ENCODE measurements at regions of chr11 and their contacts with region 1.

Region 1: DNA sequence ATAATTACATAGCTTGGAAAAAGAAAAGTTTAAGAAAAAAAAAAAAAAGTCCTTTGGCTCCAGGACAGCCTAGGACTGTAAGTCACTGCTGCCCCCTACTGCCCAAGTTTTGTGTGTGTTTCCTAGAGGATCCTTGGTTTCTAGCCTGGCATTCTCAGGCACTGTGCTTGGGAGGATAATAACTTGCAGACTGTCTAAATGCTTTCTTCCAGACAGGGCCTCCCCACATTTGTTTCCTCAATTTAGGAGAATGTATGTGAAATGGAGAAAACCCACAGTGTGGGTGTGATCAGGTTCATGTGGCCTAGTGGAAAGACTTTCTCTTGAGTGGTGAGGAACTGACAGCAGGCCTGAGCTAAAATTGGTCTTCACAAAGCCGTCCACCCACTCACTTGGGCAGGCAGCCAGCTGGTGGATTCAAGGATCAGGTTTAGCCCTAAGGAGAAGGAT is 191.0 kb downstream of the NAV2 start:
- DNase-seq: peak in 5 of 6 donors; percentile 70 to 83 (median 80)
- ATAC-seq: peak; percentile 75 to 87 (median 87)
- H3K4me3 ChIP-seq: no peak overlapping the region
- H3K27ac ChIP-seq: no peak overlapping the region
- H3K4me1 ChIP-seq: peaks cover 0 to 18% (median 12%) of the 10 kb centered on the region in 3 donors
- H3K27me3 ChIP-seq: no peaks in the 10 kb centered on the region
- CTCF ChIP-seq: peak; percentile 54 to 72 (median 64)

Region 2: GRCh38 chr11:19561011-19561410 is 342.6 kb before region 1 on chr11:
- intact Hi-C with region 1: loop called in 2 of 3 experiments (anchors 5 kb)
- DNase-seq: no peak
- ATAC-seq: no peak
- H3K4me3 ChIP-seq: no peak overlapping the region
- H3K27ac ChIP-seq: no peak overlapping the region
- H3K4me1 ChIP-seq: no peaks in the 10 kb centered on the region
- H3K27me3 ChIP-seq: no peaks in the 10 kb centered on the region
- CTCF ChIP-seq: no peak

Region 3: GRCh38 chr11:19628018-19628417 is 275.6 kb before region 1 on chr11:
- intact Hi-C with region 1: no loop called
- DNase-seq: peak in 2 of 6 donors; percentile 6 to 14
- ATAC-seq: peak in 2 of 4 donors; percentile 20 to 64
- H3K4me3 ChIP-seq: no peak overlapping the region
- H3K27ac ChIP-seq: no peak overlapping the region
- H3K4me1 ChIP-seq: no peaks in the 10 kb centered on the region
- H3K27me3 ChIP-seq: no peaks in the 10 kb centered on the region
- CTCF ChIP-seq: no peak

Region 4: DNA sequence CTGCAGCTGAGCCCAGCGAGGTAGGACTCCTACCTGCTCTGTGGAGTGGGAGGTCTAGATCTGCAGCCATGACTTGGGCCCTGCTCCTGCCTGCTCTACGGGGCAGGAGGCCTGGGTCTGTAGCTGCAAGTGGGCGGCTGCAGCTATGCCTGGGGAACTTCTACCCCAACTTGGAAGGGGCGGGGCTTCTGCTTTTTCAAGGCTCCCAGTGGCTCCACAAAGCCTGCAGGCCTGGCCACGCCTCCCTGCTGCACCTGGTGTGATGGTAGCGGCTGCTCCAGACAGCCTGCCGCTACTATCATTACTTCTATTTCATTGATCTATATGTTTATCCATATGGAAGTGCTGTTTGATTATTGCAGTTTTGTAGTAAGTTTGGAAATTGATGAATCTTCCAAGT is 887.0 kb after region 1 on chr11:
- intact Hi-C with region 1: no loop called
- DNase-seq: no peak
- ATAC-seq: no peak
- H3K4me3 ChIP-seq: no peak overlapping the region
- H3K27ac ChIP-seq: no peak overlapping the region
- H3K4me1 ChIP-seq: no peaks in the 10 kb centered on the region
- H3K27me3 ChIP-seq: no peaks in the 10 kb centered on the region
- CTCF ChIP-seq: no peak

Measured in pancreas (tissue), 10 donors.